Activated CD4-positive, alpha-beta T cell treated with anti-CD3 and anti-CD28 coated beads for 36 hours (primary cell): ENCODE measurements at regions of chr19 and their contacts with region 1.

Region 1: GRCh38 chr19:4369888-4370260 is 26.5 kb downstream of the MPND start:
- DNase-seq: peak; percentile 91
- ATAC-seq: peak; percentile 79
- H3K4me3 Mint-ChIP-seq: peak overlapping the region; percentile 63
- H3K27ac Mint-ChIP-seq: peak overlapping the region; percentile 93
- H3K4me1 Mint-ChIP-seq: peaks cover 40% of the 10 kb centered on the region
- H3K27me3 Mint-ChIP-seq: no peaks in the 10 kb centered on the region

Region 2: DNA sequence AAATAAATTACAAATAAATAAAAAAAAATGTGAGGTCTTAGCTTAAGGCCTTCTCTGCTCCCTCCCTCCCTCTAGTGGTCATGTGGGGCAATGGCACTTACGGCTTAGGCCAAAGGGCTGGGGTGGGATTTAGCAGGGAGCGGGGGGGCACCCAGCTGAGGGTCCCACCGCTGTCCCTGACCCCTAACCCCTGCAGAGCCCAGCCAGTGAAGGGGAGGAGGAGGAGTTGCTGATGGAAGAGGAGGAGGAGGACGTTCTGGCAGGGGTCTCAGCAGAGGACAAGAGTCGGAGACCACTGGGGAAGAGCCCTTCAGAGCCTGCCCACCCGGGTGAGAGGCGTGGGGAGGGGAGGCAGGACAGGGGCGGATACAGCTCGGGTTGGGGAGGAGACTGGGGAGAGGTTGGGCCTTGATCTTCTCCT is 17.2 kb before region 1 on chr19:
- CTCF ChIA-PET with region 1: interaction called, 16 read pairs
- POLR2A ChIA-PET with region 1: interaction called, 4 read pairs
- intact Hi-C with region 1: no loop called
- DNase-seq: peak; percentile 74
- ATAC-seq: peak; percentile 72
- H3K4me3 Mint-ChIP-seq: no peak overlapping the region
- H3K27ac Mint-ChIP-seq: no peak overlapping the region
- H3K4me1 Mint-ChIP-seq: no peaks in the 10 kb centered on the region
- H3K27me3 Mint-ChIP-seq: no peaks in the 10 kb centered on the region

Region 3: DNA sequence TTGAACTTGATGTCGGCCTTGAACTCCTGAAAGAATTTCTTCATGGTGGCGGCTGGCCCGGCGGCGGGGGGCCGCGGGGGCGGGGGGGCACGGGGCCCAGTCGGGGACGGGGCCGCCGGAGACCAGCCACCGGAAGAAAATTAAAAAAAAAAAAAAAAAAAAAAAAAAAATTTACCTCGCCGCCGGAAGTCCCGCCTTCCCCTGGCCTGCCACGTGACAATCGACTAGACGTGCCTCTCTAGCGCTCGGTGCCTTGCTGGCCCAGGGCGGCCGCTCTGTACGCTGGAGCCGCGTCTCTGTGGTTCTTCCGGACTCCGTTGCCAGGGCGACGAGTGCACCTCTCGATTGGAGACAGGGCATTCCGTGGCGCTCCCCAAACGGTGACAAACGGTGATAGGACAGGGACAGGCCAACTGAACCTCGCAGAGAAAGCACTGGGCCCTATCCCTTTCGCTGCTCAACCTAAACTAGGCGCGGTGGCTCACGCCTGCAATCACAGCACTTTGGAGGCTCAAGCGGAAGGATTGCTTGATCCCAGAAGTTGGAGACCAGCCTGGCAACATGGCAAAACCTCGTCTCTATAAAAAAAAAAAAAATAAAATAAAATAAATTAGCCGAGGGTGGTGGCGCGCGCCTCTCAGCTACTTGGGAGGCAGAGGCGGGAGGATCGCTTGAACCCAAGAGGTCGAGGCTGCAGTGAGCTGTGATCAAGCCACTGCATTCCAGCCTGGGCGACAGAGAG is 88.0 kb after region 1 on chr19 and contains the start of gene UBXN6:
- CTCF ChIA-PET with region 1: no interaction called
- POLR2A ChIA-PET with region 1: no interaction called
- intact Hi-C with region 1: loop called in 1 of 2 experiments (anchors 1 kb)
- DNase-seq: peak; percentile 99
- ATAC-seq: peak; percentile 93
- H3K4me3 Mint-ChIP-seq: peak within 1 kb of the TSS; percentile 86
- H3K27ac Mint-ChIP-seq: peak within 1 kb of the TSS; percentile 86
- H3K4me1 Mint-ChIP-seq: peaks cover 19% of the 10 kb centered on the region
- H3K27me3 Mint-ChIP-seq: no peaks in the 10 kb centered on the region
- total RNA-seq, gene UBXN6: 32.9 to 38.4 TPM

Region 4: DNA sequence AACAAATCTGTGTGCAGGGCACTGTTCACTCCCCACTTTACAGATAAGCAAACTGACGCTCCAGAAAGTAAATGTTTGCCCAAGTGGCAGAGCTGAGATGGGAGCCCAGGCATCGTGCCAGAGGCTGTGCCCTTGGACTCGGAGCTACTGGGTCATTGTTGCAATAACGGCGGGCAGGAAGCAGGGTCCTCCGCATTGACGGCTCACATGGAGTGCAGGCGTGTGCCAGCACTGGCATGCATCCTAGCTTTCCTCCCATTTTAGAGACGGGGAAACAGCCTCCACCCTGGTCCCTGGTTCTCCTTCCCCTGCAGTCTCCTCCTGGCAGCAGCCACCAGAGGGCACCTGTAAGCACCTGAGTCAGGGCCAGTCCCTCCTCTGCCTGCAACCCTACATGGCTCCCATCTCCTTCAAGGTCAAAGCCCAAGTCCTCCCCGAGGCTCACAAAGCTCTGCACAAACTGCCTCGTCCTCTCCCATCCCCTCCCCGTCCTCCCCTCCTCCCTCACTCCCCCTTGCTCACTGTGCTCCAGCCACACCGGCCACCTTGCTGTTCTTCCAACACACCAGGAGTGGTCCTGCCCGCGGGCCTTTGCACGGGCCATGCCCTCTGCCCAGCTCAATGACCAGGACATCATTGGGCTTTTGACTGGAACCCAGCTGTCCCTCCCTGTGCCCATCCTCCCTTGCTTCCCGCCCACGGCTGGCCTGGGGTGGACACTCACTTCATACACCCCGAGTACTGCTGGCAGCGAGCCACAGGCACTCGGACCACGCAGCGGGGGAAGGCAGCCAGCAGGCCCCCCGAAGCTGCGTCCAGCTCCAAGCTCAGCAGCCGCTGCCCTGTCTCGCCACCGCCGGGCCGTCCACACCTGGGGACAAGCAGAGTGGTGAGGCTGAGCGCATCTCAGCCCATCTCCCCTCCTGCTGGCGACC is 177.7 kb after region 1 on chr19:
- CTCF ChIA-PET with region 1: no interaction called
- POLR2A ChIA-PET with region 1: no interaction called
- intact Hi-C with region 1: no loop called
- DNase-seq: peak; percentile 63
- ATAC-seq: peak; percentile 70
- H3K4me3 Mint-ChIP-seq: no peak overlapping the region
- H3K27ac Mint-ChIP-seq: no peak overlapping the region
- H3K4me1 Mint-ChIP-seq: no peaks in the 10 kb centered on the region
- H3K27me3 Mint-ChIP-seq: peaks cover 6% of the 10 kb centered on the region